GM10248 (cell line): ENCODE measurements at regions of chr1 and their contacts with region 1.

Region 1: GRCh38 chr1:233440951-233441401 is 113.5 kb downstream of the MAP3K21 start:
- DNase-seq: peak; percentile 44
- CTCF ChIP-seq: peak; percentile 58

Region 2: GRCh38 chr1:233121947-233122559 is 318.9 kb before region 1 on chr1:
- CTCF ChIA-PET with region 1: no interaction called
- POLR2A ChIA-PET with region 1: no interaction called
- DNase-seq: no peak
- CTCF ChIP-seq: no peak

Region 3: DNA sequence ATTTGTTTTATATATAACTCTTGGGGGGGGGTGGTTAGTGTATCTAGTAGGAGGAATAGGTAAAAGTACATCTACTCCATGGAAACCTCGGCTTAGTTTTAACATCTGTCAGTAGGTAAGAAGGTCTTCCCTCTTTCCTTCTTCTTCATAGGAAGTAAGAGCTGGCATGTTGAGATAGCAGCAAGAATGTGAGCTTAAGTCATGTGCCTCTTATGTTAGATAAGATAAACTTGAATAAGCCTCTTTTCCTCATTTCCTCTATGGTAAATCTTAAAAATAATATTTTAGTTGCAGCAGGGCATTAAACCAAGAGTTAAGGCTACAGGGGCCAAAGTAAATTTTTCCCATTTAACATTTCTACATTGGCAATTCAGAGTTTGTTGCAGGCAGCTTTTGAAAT is 13.1 kb before region 1 on chr1:
- CTCF ChIA-PET with region 1: interaction called, 28 read pairs
- POLR2A ChIA-PET with region 1: no interaction called
- DNase-seq: no peak
- CTCF ChIP-seq: no peak

Region 4: GRCh38 chr1:233459470-233459945 is 18.5 kb after region 1 on chr1:
- CTCF ChIA-PET with region 1: interaction called, 16 read pairs
- POLR2A ChIA-PET with region 1: no interaction called
- DNase-seq: peak; percentile 50
- CTCF ChIP-seq: no peak

Region 5: GRCh38 chr1:233518349-233518748 is 77.4 kb after region 1 on chr1:
- CTCF ChIA-PET with region 1: interaction called, 17 read pairs
- POLR2A ChIA-PET with region 1: no interaction called
- DNase-seq: peak; percentile 42
- CTCF ChIP-seq: peak; percentile 55

Region 6: GRCh38 chr1:233790662-233791375 is 349.8 kb after region 1 on chr1:
- CTCF ChIA-PET with region 1: interaction called, 65 read pairs
- POLR2A ChIA-PET with region 1: no interaction called
- DNase-seq: peak; percentile 61
- CTCF ChIP-seq: peak; percentile 86